A673 (cell line): ENCODE measurements at regions of chr6 and their contacts with region 1.

Region 1: GRCh38 chr6:27687154-27688013 is 214.5 kb upstream of the ZNF184 start:
- DNase-seq: peak; percentile 94
- H3K4me3 ChIP-seq: peak overlapping the region; percentile 57
- H3K27ac ChIP-seq: peak overlapping the region; percentile 66
- H3K4me1 ChIP-seq: no peaks in the 10 kb centered on the region
- H3K27me3 ChIP-seq: no peaks in the 10 kb centered on the region
- CTCF ChIP-seq: peak; percentile 84

Region 2: GRCh38 chr6:26322645-26323482 is 1364.5 kb before region 1 on chr6:
- CTCF ChIA-PET with region 1: interaction called, 12 read pairs
- POLR2A ChIA-PET with region 1: no interaction called
- intact Hi-C with region 1: no loop called
- DNase-seq: peak; percentile 96
- H3K4me3 ChIP-seq: peak overlapping the region; percentile 65
- H3K27ac ChIP-seq: peak overlapping the region; percentile 59
- H3K4me1 ChIP-seq: no peaks in the 10 kb centered on the region
- H3K27me3 ChIP-seq: no peaks in the 10 kb centered on the region
- CTCF ChIP-seq: no peak

Region 3: DNA sequence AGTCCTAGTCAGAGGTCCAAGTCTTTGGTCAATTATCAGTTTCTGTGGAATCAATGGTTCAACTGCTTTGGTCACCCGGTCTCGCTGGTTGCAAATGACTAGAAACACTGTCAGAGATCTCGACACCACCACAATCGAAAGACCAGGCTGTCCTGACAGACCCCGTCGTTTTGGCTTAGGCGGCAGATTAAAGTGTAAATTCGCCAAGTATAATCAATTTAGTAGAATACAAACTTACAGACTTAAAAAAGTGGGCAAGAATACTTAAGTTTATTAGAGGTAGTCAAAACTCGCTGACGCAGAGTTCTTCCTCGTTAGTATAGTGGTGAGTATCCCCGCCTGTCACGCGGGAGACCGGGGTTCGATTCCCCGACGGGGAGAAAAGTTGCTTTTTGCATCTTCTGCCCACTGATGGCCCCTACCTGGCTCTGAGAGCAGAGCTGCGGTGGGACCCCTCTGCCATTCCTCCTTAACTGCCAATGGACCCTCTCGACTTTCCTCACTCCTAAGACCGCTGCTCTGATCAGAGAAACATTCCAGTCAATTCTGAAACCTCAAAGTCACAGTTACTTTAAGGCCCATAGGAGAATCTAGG is 183.9 kb before region 1 on chr6:
- CTCF ChIA-PET with region 1: no interaction called
- POLR2A ChIA-PET with region 1: no interaction called
- intact Hi-C with region 1: loop called (anchors 5 kb)
- DNase-seq: peak; percentile 85
- H3K4me3 ChIP-seq: peak overlapping the region; percentile 56
- H3K27ac ChIP-seq: no peak overlapping the region
- H3K4me1 ChIP-seq: no peaks in the 10 kb centered on the region
- H3K27me3 ChIP-seq: no peaks in the 10 kb centered on the region
- CTCF ChIP-seq: no peak

Region 4: GRCh38 chr6:27517928-27518787 is 169.2 kb before region 1 on chr6:
- CTCF ChIA-PET with region 1: no interaction called
- POLR2A ChIA-PET with region 1: no interaction called
- intact Hi-C with region 1: no loop called
- DNase-seq: no peak
- H3K4me3 ChIP-seq: peak overlapping the region; percentile 70
- H3K27ac ChIP-seq: peak overlapping the region; percentile 77
- H3K4me1 ChIP-seq: peaks cover 7% of the 10 kb centered on the region
- H3K27me3 ChIP-seq: peaks cover 14% of the 10 kb centered on the region
- CTCF ChIP-seq: no peak

Region 5: GRCh38 chr6:27592481-27593199 is 94.7 kb before region 1 on chr6:
- CTCF ChIA-PET with region 1: no interaction called
- POLR2A ChIA-PET with region 1: no interaction called
- intact Hi-C with region 1: loop called (anchors 5 kb)
- DNase-seq: peak; percentile 94
- H3K4me3 ChIP-seq: peak overlapping the region; percentile 51
- H3K27ac ChIP-seq: no peak overlapping the region
- H3K4me1 ChIP-seq: no peaks in the 10 kb centered on the region
- H3K27me3 ChIP-seq: no peaks in the 10 kb centered on the region
- CTCF ChIP-seq: no peak

Region 6: GRCh38 chr6:27753668-27754407 is 66.5 kb after region 1 on chr6:
- CTCF ChIA-PET with region 1: interaction called, 6 read pairs
- POLR2A ChIA-PET with region 1: no interaction called
- intact Hi-C with region 1: loop called (anchors 2 kb)
- DNase-seq: peak; percentile 97
- H3K4me3 ChIP-seq: peak overlapping the region; percentile 68
- H3K27ac ChIP-seq: no peak overlapping the region
- H3K4me1 ChIP-seq: no peaks in the 10 kb centered on the region
- H3K27me3 ChIP-seq: no peaks in the 10 kb centered on the region
- CTCF ChIP-seq: 0 out of 2 replicates have a peak, but pooled peaks have one; percentile 25